MCF 10A (cell line): ENCODE measurements at regions of chr7 and their contacts with region 1.

Region 1: GRCh38 chr7:73451780-73452398 is 18.3 kb downstream of the FZD9 start:
- DNase-seq: peak; percentile 62
- H3K4me3 Mint-ChIP-seq: no peak overlapping the region
- H3K27ac Mint-ChIP-seq: no peak overlapping the region
- H3K4me1 Mint-ChIP-seq: no peaks in the 10 kb centered on the region
- H3K27me3 Mint-ChIP-seq: no peaks in the 10 kb centered on the region
- CTCF ChIP-seq: peak; percentile 96

Region 2: DNA sequence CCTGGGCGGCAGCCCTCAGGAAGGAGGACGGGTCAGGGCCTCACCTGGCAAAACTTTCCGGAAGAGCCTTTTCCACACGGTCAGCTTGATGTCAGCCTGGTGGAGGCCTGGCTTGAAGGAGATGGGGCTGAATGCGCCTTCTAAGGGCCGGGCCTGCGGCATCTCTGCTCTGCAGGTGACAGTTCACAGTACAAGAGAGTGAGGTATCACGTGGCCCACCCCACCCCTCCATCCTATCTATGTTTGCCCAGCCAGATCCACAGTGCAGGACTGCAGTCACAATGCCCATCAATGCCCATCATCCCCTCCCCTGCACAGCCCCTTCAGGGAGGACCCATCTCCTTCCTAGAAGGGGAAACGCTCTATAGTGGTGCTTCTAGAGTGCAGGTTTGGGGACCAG is 135.4 kb before region 1 on chr7:
- CTCF ChIA-PET with region 1: interaction called, 3 read pairs
- POLR2A ChIA-PET with region 1: no interaction called
- intact Hi-C with region 1: loop called (anchors 5 kb)
- DNase-seq: no peak
- H3K4me3 Mint-ChIP-seq: no peak overlapping the region
- H3K27ac Mint-ChIP-seq: no peak overlapping the region
- H3K4me1 Mint-ChIP-seq: no peaks in the 10 kb centered on the region
- H3K27me3 Mint-ChIP-seq: no peaks in the 10 kb centered on the region
- CTCF ChIP-seq: no peak

Region 3: DNA sequence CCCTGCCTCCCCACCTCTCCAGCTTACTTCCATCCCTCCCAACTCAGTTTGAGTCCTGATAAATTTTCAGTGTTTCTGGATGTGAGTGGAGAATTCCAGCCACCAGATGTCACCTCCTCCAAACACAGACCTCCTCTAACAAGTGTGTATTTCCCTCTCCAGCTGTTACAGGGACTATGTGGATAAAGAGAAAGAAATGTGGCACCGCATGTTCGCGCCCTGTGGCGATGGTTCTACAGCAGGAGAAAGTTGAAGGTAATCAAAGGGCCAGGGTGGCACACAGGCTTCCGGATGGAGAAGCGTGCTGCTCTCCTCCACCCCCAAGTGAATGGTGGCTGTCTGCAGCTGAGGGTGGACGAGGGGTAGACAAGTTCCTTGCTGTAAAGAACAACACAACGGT is 109.2 kb before region 1 on chr7:
- CTCF ChIA-PET with region 1: no interaction called
- POLR2A ChIA-PET with region 1: no interaction called
- intact Hi-C with region 1: loop called (anchors 2 kb)
- DNase-seq: peak; percentile 35
- H3K4me3 Mint-ChIP-seq: no peak overlapping the region
- H3K27ac Mint-ChIP-seq: no peak overlapping the region
- H3K4me1 Mint-ChIP-seq: peaks cover 9% of the 10 kb centered on the region
- H3K27me3 Mint-ChIP-seq: peaks cover 2% of the 10 kb centered on the region
- CTCF ChIP-seq: peak; percentile 35

Region 4: GRCh38 chr7:73437621-73438416 is 14.1 kb before region 1 on chr7:
- CTCF ChIA-PET with region 1: interaction called, 25 read pairs
- POLR2A ChIA-PET with region 1: no interaction called
- intact Hi-C with region 1: no loop called
- DNase-seq: no peak
- H3K4me3 Mint-ChIP-seq: no peak overlapping the region
- H3K27ac Mint-ChIP-seq: no peak overlapping the region
- H3K4me1 Mint-ChIP-seq: no peaks in the 10 kb centered on the region
- H3K27me3 Mint-ChIP-seq: no peaks in the 10 kb centered on the region
- CTCF ChIP-seq: no peak

Region 5: GRCh38 chr7:73463966-73464365 is 12.1 kb after region 1 on chr7:
- CTCF ChIA-PET with region 1: interaction called, 33 read pairs
- POLR2A ChIA-PET with region 1: interaction called, 3 read pairs
- intact Hi-C with region 1: no loop called
- DNase-seq: no peak
- H3K4me3 Mint-ChIP-seq: no peak overlapping the region
- H3K27ac Mint-ChIP-seq: no peak overlapping the region
- H3K4me1 Mint-ChIP-seq: no peaks in the 10 kb centered on the region
- H3K27me3 Mint-ChIP-seq: no peaks in the 10 kb centered on the region
- CTCF ChIP-seq: no peak